ENCODE measurements at regions of chr12 and their contacts with region 1.

Region 1: DNA sequence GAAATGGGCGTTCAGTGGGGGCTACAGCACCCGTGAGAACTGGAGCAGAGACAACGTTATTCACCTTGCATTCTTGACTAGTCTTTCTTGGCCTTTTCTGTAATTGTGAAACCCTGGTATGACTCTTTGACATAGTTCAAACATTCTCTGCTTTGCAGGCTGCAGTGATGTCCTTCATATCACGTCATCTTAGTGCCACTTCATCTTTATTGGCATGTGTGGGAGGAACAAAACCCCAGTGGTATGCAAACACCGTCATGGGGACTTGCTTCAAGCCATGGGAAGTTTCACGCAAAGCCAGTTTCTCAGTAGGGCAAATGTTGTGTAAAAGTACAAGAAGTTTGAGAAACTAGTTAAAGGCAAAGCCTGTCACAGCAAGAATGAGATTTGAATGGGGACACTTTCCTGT is 20.2 kb upstream of the DUSP16 start:
- DNase-seq: peak; percentile 30
- H3K4me3 Mint-ChIP-seq: peak overlapping the region; percentile 21
- H3K27ac Mint-ChIP-seq: peak overlapping the region; percentile 88
- H3K4me1 Mint-ChIP-seq: peaks cover 45% of the 10 kb centered on the region
- H3K27me3 Mint-ChIP-seq: no peaks in the 10 kb centered on the region

Region 2: DNA sequence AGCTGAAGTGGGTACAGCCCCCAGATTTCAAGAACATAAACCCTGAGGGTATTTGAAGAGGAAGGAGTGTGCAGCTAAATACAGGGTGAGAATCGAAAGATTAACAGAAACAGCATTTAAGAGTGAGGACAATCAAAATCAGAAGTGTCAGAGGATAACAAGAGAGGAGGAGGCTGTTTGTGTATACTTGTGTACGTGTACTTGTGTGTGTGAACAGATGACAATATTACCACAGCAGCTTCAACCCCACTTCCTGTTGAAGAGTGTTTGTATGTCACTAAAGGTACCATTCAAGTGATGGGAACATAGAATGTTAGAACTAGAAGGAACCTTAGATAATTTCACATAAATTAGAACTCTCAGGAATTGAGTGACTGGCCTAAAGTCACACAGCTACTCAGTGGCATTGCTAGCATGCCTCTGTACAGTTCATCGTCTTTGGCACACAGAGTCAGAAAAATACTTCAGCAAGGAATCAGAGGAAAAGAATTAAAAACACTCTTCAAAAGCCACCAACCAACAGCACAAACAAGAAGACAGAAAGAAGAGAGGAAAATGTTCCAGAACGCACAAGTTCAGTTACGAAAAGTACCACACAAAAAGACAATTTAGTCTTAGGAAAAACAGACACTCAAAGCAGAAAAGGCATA is 676.5 kb before region 1 on chr12:
- intact Hi-C with region 1: loop called (anchors 5 kb)
- DNase-seq: no peak
- H3K4me3 Mint-ChIP-seq: peak overlapping the region; percentile 30
- H3K27ac Mint-ChIP-seq: peak overlapping the region; percentile 88
- H3K4me1 Mint-ChIP-seq: peaks cover 53% of the 10 kb centered on the region
- H3K27me3 Mint-ChIP-seq: no peaks in the 10 kb centered on the region

Region 3: GRCh38 chr12:12442548-12443071 is 140.3 kb before region 1 on chr12:
- intact Hi-C with region 1: loop called (anchors 1 kb)
- DNase-seq: no peak
- H3K4me3 Mint-ChIP-seq: peak overlapping the region; percentile 34
- H3K27ac Mint-ChIP-seq: peak overlapping the region; percentile 95
- H3K4me1 Mint-ChIP-seq: peaks cover 74% of the 10 kb centered on the region
- H3K27me3 Mint-ChIP-seq: no peaks in the 10 kb centered on the region

Region 4: DNA sequence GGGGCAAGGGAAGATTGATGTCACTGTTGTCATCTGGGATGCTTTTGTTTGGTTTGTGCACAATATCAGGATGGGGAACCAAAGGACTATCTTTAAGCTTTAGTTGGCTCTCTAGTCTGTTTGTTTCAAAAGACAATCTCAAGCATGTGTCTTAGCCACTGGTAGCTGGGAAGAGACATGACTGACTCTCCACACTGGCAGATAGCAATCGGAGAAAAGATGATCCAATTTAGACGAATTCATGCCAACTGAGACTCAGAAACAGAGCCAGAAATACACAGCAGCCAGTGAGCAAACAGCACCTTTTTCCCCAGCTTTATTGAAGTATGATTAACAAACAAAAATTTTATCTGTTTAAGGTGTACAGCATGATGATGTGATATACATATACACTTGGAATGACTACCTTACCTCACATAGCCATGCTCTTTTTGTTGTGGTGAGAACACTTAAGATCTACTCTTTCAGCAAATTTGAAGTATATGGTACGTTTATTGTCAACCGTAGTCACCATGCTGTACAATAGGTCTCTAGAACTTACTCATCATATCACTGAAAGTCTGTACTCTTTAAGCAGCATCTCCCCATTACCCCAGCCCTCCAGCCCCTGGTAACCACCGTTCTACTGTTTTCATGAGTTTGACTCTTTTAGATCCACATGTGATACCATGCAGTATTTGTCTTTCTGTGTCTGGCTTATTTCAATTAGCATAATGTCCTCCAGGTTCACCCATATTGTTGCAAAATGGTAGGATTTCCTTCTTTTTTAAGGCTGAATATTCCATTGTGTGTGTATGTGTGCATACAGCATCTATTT is 70.8 kb before region 1 on chr12:
- intact Hi-C with region 1: loop called (anchors 1 kb)
- DNase-seq: no peak
- H3K4me3 Mint-ChIP-seq: no peak overlapping the region
- H3K27ac Mint-ChIP-seq: no peak overlapping the region
- H3K4me1 Mint-ChIP-seq: peaks cover 23% of the 10 kb centered on the region
- H3K27me3 Mint-ChIP-seq: no peaks in the 10 kb centered on the region

Region 5: DNA sequence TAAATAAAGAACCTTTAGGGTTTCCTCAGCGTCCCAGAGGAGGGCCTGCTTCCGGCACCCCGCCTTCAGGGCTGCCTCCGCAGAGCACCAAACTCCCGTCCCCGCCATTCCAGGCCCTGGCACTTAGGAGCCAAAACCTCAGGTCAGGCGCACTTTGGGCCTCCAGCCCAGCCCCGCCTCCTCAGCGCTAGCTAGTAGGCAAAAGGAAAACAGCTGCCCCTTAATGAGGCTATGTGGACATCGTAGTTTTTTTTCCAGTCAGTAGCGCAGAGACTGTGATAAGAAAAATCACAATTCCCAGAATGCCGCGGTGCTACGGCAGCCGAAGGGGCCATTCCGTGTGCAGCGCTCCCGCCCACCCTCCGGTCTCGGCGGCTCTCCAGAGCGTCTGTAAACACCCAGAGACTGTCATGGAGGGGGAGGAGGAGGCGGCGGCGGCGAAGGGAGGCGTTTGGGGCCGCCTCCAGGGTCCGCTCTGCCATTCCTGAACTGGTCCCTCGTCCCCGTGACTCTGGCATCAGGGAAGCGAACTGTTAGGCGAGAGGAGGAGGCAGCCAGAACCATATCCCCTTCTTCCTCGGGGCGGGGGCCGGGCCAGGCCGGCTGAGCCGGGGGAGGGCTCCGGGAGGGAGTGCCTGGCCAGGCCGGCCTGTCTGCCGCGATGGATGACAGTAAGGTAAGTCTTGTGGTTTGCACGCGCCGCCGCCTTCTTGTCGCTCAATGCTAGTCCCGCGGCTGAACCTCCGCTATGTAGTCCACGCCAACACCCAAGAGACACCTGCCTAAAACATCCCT is 28.8 kb after region 1 on chr12 and contains the start of gene CREBL2:
- intact Hi-C with region 1: loop called (anchors 1 kb)
- DNase-seq: peak; percentile 78
- H3K4me3 Mint-ChIP-seq: peak within 1 kb of the TSS; percentile 95
- H3K27ac Mint-ChIP-seq: peak within 1 kb of the TSS; percentile 96
- H3K4me1 Mint-ChIP-seq: peaks cover 47% of the 10 kb centered on the region
- H3K27me3 Mint-ChIP-seq: no peaks in the 10 kb centered on the region
- total RNA-seq, gene CREBL2: 16.7 and 17.9 TPM in 2 replicates

Region 6: DNA sequence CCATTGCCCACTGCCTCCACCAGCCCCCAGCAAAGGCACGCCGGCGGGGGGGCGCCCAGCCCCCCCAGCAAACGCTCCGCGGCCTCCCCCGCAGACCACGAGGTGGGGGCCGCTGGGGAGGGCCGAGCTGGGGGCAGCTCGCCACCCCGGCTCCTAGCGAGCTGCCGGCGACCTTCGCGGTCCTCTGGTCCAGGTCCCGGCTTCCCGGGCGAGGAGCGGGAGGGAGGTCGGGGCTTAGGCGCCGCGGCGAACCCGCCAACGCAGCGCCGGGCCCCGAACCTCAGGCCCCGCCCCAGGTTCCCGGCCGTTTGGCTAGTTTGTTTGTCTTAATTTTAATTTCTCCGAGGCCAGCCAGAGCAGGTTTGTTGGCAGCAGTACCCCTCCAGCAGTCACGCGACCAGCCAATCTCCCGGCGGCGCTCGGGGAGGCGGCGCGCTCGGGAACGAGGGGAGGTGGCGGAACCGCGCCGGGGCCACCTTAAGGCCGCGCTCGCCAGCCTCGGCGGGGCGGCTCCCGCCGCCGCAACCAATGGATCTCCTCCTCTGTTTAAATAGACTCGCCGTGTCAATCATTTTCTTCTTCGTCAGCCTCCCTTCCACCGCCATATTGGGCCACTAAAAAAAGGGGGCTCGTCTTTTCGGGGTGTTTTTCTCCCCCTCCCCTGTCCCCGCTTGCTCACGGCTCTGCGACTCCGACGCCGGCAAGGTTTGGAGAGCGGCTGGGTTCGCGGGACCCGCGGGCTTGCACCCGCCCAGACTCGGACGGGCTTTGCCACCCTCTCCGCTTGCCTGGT is 134.1 kb after region 1 on chr12 and contains the start of gene CDKN1B:
- intact Hi-C with region 1: loop called (anchors 1 kb)
- DNase-seq: peak; percentile 77
- H3K4me3 Mint-ChIP-seq: peak within 1 kb of the TSS; percentile 98
- H3K27ac Mint-ChIP-seq: peak within 1 kb of the TSS; percentile 99
- H3K4me1 Mint-ChIP-seq: peaks cover 71% of the 10 kb centered on the region
- H3K27me3 Mint-ChIP-seq: no peaks in the 10 kb centered on the region
- total RNA-seq, gene CDKN1B: 54.8 and 61.9 TPM in 2 replicates

Region 7: GRCh38 chr12:12954356-12954755 is 371.5 kb after region 1 on chr12:
- intact Hi-C with region 1: no loop called
- DNase-seq: no peak
- H3K4me3 Mint-ChIP-seq: no peak overlapping the region
- H3K27ac Mint-ChIP-seq: no peak overlapping the region
- H3K4me1 Mint-ChIP-seq: no peaks in the 10 kb centered on the region
- H3K27me3 Mint-ChIP-seq: peaks cover 4% of the 10 kb centered on the region

Measured in activated T-helper 1 cell treated with anti-CD3 and anti-CD28 coated beads, Interleukin-12 subunit alpha, Interleukin-12 subunit beta, Interleukin-2, Interleukin-4 antibody, amounts not matched to agents 30 ng/mL and 10 ng/mL and 1 ng/mL, durations not matched to agents 14 hours and 24 hours and 36 hours (primary cell).